Dendritic cell treated with granulocyte-macrophage colony-stimulating factor and Interleukin-4, amounts not matched to agents 40 ng/mL and 50 ng/mL, for 4 days (primary cell): ENCODE measurements at regions of chr16 and their contacts with region 1.

Region 1: GRCh38 chr16:75110637-75111513 is 5.7 kb downstream of the LDHD start:
- H3K4me3 Mint-ChIP-seq: peak overlapping the region; percentile 28
- H3K27ac Mint-ChIP-seq: peak overlapping the region; percentile 80
- H3K4me1 Mint-ChIP-seq: peaks cover 78% of the 10 kb centered on the region
- H3K27me3 Mint-ChIP-seq: peaks cover 32% of the 10 kb centered on the region

Region 2: GRCh38 chr16:74998481-74999218 is 112.2 kb before region 1 on chr16 and contains the start of gene ZNRF1:
- intact Hi-C with region 1: loop called (anchors 1 kb)
- H3K4me3 Mint-ChIP-seq: peak within 1 kb of the TSS; percentile 85
- H3K27ac Mint-ChIP-seq: peak within 1 kb of the TSS; percentile 78
- H3K4me1 Mint-ChIP-seq: peaks cover 50% of the 10 kb centered on the region
- H3K27me3 Mint-ChIP-seq: peaks cover 26% of the 10 kb centered on the region